Heart right ventricle (tissue), 16 donors: ENCODE measurements at regions of chr4 and their contacts with region 1.

Region 1: GRCh38 chr4:81052119-81053068 is 21.9 kb downstream of the BMP3 start:
- DNase-seq: peak; percentile 16 to 28
- ATAC-seq: peak in 2 of 8 donors; percentile 64 to 72
- H3K4me3 ChIP-seq: no peak overlapping the region
- H3K27ac ChIP-seq: no peak overlapping the region
- H3K4me1 ChIP-seq: peaks cover 0 to 6% (median 0%) of the 10 kb centered on the region in 9 donors
- H3K27me3 ChIP-seq: peaks cover 0 to 2% (median 0%) of the 10 kb centered on the region in 7 donors
- CTCF ChIP-seq: peak; percentile 25 to 65 (median 59)

Region 2: GRCh38 chr4:80382090-80382832 is 670.1 kb before region 1 on chr4:
- intact Hi-C with region 1: loop called in 1 of 10 experiments (anchors 5 kb)
- DNase-seq: no peak
- ATAC-seq: no peak
- H3K4me3 ChIP-seq: no peak overlapping the region
- H3K27ac ChIP-seq: no peak overlapping the region
- H3K4me1 ChIP-seq: no peaks in the 10 kb centered on the region
- H3K27me3 ChIP-seq: no peaks in the 10 kb centered on the region
- CTCF ChIP-seq: no peak

Region 3: DNA sequence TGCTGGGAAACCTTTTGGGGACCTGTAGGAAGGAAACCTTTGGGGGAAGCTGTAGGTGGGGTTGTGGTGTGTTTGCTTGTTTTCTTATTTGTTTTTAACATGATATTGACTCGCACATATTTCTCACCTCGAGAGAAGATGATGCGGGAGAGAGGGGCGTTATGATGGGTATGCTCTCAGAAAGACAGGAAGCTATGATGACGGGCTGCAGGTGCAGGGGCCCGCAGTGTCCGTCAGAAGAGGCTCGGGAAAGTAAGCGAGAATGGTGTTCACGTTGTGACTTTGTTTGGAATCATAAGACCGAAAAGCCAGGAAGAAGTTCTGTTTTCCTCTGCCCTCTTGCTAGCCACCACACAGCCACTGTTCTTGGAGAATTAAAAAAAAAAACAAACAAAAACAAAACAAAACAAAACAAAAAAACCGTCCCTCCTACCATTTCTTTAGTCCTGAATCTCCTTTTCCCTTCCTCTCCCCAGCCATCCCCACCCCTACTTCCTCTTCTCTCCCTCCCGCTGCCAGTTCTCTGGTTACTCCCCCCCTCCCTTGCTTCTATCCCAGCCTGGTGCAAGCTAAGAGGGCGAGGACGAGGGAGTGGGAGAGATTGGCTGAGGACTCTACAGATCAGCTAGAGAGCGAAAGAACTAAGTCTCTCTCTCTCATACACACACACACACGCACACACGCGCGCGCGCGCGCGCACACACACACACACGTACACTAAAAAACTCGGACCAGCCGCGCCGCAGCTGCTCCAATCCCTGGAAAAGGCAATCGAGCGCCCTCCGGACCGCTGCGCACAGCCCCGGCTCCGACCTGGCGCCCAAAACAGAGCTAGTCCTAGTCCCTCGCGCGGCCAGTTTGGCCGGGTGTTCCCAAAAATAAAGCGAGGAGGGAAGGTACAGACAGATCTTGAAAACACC is 22.1 kb before region 1 on chr4 and contains the start of gene BMP3:
- intact Hi-C with region 1: no loop called
- DNase-seq: no peak
- ATAC-seq: peak in 4 of 8 donors; percentile 22 to 46 (median 29)
- H3K4me3 ChIP-seq: peak within 1 kb of the TSS; percentile 6 to 46 (median 36)
- H3K27ac ChIP-seq: no peak within 1 kb of the TSS
- H3K4me1 ChIP-seq: peaks cover 0 to 20% (median 10%) of the 10 kb centered on the region in 9 donors
- H3K27me3 ChIP-seq: peaks cover 5 to 88% (median 69%) of the 10 kb centered on the region in 7 donors
- CTCF ChIP-seq: no peak
- total RNA-seq, gene BMP3: 0.12 TPM in 1 of 10 donors, not detected in the others

Region 4: DNA sequence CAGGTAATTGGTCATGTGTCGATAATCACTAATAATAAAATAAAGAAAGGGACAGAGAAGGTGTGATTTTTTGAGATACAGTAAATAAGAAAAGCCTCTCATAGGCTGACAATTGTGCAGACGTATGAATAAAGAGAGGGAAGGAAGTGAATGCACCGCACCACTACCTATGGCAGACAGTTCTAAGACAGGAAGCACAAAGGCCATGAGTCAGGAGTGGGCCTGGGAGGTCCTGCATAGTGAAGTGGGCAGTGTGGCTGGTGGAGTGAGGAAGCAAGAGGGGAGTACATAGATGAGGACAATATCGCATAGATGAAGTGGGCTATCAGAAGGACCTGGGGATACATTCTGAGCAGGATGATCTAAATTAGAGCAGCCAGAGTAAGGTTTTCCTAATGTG is 53.8 kb after region 1 on chr4:
- intact Hi-C with region 1: no loop called
- DNase-seq: no peak
- ATAC-seq: no peak
- H3K4me3 ChIP-seq: no peak overlapping the region
- H3K27ac ChIP-seq: no peak overlapping the region
- H3K4me1 ChIP-seq: no peaks in the 10 kb centered on the region
- H3K27me3 ChIP-seq: no peaks in the 10 kb centered on the region
- CTCF ChIP-seq: no peak

Region 5: DNA sequence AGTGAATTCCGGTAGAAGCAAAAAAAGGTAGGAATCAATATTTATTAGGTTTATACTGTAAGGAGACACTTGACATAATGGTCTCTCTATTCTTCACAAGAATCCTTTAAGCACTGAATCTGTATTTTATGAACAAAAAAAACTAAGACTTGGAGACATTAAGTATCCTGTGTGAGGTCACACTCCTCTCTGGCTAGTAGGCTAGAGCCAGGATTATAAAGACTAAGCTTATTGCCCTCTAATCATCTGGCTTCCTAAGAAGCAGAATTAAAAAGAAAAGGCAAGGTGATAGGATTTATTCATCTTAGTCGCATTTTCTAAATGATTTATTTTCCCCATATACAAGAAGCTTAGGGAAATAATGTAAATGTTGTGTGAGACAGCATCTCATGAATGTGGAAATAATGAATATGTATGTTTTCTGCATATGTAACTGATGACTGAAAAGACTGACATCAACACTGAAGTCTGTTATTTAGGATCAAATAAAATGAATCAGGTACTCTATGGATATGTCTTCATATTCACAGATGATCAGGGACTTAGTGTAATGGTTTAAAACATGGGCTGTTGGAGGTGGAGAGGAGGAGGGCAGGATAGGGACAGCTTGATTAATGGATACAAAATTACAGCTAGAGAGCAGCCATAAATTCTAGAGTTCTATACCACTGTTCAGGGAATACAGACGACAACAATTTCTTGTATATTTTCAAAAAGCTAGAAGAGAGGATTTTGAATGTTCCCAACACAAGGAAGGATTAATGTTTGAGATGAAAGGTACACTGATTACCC is 193.0 kb after region 1 on chr4:
- intact Hi-C with region 1: no loop called
- DNase-seq: no peak
- ATAC-seq: no peak
- H3K4me3 ChIP-seq: no peak overlapping the region
- H3K27ac ChIP-seq: no peak overlapping the region
- H3K4me1 ChIP-seq: no peaks in the 10 kb centered on the region
- H3K27me3 ChIP-seq: no peaks in the 10 kb centered on the region
- CTCF ChIP-seq: no peak

Region 6: GRCh38 chr4:81698538-81699296 is 646.3 kb after region 1 on chr4:
- intact Hi-C with region 1: no loop called
- DNase-seq: no peak
- ATAC-seq: no peak
- H3K4me3 ChIP-seq: no peak overlapping the region
- H3K27ac ChIP-seq: no peak overlapping the region
- H3K4me1 ChIP-seq: no peaks in the 10 kb centered on the region
- H3K27me3 ChIP-seq: no peaks in the 10 kb centered on the region
- CTCF ChIP-seq: no peak